Posterior vena cava (tissue), 2 donors: ENCODE measurements at regions of chr12 and their contacts with region 1.

Region 1: GRCh38 chr12:68317047-68317667 is 15.0 kb downstream of the MDM1 start:
- DNase-seq: no peak

Region 2: GRCh38 chr12:68040450-68041075 is 276.6 kb before region 1 on chr12:
- intact Hi-C with region 1: loop called in 1 of 2 experiments (anchors 10 kb)
- DNase-seq: no peak

Region 3: DNA sequence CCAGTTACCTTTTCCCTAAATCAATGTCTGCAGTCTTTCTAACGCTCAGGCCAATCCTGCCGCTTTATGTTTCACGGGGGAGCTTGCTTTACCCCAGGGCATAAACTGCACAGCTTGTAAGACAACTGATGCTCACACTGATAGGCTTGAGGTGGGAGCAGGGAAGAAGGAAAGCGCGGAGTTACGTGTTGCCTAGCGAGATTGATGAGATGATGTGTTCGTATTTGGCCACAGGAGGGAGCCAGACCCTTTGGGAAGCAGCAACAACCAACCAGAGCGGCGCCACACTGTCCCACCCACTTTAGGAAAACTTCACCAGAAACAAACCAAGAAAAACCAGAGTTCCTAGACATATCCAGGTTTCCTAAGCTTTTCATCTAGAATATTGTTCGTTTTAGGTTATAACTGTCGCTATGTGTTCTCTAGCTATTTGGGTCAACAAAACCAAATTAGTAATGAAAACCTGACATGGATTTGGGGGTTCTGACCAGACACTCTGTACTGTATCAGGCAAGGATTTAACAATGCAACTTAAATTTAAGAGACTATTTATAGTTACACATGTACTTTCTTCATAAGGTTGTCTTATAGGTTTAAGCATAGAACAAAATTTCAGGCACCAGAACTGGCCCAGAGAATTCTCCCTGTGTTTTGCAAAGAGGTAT is 93.9 kb before region 1 on chr12:
- intact Hi-C with region 1: loop called (anchors 2 to 5 kb)
- DNase-seq: peak; percentile 92